ENCODE measurements at regions of chr10 and their contacts with region 1.

Region 1: DNA sequence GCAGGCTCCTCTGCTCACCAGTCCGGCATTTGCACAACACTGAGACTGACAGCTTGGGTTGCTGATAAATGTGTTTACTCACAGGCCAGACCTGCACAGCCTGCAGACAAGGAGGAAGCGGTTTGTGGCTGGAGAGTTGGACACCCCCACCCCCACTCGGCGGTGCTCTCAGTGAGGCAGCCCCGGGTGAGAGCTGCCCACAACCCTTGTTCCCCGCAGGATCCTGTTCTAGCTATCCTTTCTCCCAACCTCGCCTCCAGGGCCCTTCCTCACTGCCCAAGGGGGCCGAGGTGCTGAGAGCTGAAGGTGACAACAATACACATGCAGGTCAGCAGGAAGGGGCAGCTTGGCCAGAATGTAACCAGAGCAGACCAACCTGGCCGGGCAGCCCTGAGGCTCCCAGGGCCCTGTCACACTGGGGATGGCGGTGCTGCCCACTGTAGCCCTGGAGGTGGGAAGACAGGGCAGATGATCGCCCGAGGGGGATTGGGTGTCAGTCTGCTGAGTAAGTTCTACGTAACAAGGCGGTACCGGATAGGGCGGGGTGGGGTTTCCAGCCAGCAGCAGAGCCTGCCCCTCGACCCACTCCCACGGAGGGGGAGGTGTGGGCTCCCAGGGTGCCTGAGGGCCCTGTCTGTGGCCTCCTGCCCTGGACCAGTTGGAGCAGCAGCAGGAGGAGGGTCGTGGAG is 2.1 kb upstream of the ADAM8 start:
- DNase-seq: peak; percentile 44
- ATAC-seq: peak; percentile 10
- H3K4me3 Mint-ChIP-seq: peak overlapping the region; percentile 76
- H3K27ac Mint-ChIP-seq: peak overlapping the region; percentile 80
- H3K4me1 Mint-ChIP-seq: peaks cover 38% of the 10 kb centered on the region
- H3K27me3 Mint-ChIP-seq: no peaks in the 10 kb centered on the region
- CTCF ChIP-seq: no peak

Region 2: DNA sequence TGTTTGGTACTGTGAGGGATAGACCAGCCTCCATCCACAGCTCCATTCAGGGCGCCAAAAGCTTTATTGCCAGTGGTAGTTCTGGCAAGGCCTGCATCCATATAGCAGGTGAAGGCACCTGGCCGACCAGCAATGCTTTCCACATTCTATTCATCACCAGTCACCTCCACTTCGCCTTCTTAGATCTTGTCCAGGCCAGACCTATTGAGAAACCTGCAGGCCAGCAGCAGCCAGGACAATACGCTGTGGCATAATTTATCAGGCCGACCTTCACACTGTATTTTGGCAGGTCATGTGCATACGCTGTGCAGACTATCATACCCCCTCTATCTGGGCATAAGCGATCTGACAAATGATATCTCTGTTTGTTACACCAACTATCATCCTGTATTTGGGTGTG is 133.9 kb before region 1 on chr10:
- CTCF ChIA-PET with region 1: interaction called, 4 read pairs
- POLR2A ChIA-PET with region 1: interaction called, 5 read pairs
- intact Hi-C with region 1: loop called (anchors 1 kb)
- DNase-seq: no peak
- ATAC-seq: no peak
- H3K4me3 Mint-ChIP-seq: no peak overlapping the region
- H3K27ac Mint-ChIP-seq: no peak overlapping the region
- H3K4me1 Mint-ChIP-seq: peaks cover 7% of the 10 kb centered on the region
- H3K27me3 Mint-ChIP-seq: peaks cover 49% of the 10 kb centered on the region
- CTCF ChIP-seq: no peak

Region 3: DNA sequence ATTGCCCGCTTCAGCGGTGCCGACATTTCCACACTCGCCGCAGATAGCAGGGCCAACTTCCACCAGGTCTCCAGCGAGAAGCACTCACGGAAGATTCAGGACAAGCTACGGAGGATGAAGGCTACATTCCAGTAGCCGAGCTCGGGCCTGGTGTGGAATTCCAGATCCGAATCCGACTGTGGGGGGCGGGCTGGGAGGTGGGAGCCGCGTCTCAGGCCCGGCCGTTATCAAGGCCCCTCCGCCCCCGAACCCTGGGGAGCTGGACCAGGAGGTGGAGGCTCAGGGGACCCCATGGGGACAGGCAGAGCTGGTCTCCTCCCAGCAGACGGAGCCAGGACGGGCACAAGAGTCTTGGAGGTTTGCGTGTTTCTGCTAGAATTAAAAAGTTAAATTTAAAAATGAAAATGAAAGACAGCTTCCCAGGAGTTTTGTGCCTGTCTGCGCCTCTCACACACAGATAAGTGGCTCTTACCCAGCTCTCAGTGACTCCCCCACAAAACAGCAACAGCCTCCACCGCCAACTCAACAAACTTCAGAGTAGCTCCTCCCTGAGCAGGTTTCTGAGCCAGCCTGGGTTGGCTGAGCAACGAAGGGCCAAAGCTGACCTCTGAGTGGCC is 53.9 kb before region 1 on chr10:
- CTCF ChIA-PET with region 1: no interaction called
- POLR2A ChIA-PET with region 1: no interaction called
- intact Hi-C with region 1: no loop called
- DNase-seq: no peak
- ATAC-seq: no peak
- H3K4me3 Mint-ChIP-seq: no peak overlapping the region
- H3K27ac Mint-ChIP-seq: no peak overlapping the region
- H3K4me1 Mint-ChIP-seq: peaks cover 19% of the 10 kb centered on the region
- H3K27me3 Mint-ChIP-seq: peaks cover 43% of the 10 kb centered on the region
- CTCF ChIP-seq: no peak

Region 4: GRCh38 chr10:133235932-133236331 is 42.8 kb before region 1 on chr10:
- CTCF ChIA-PET with region 1: no interaction called
- POLR2A ChIA-PET with region 1: interaction called, 12 read pairs
- intact Hi-C with region 1: loop called (anchors 2 kb)
- DNase-seq: no peak
- ATAC-seq: peak; percentile 40
- H3K4me3 Mint-ChIP-seq: peak overlapping the region; percentile 66
- H3K27ac Mint-ChIP-seq: no peak overlapping the region
- H3K4me1 Mint-ChIP-seq: peaks cover 31% of the 10 kb centered on the region
- H3K27me3 Mint-ChIP-seq: peaks cover 18% of the 10 kb centered on the region
- CTCF ChIP-seq: no peak

Region 5: DNA sequence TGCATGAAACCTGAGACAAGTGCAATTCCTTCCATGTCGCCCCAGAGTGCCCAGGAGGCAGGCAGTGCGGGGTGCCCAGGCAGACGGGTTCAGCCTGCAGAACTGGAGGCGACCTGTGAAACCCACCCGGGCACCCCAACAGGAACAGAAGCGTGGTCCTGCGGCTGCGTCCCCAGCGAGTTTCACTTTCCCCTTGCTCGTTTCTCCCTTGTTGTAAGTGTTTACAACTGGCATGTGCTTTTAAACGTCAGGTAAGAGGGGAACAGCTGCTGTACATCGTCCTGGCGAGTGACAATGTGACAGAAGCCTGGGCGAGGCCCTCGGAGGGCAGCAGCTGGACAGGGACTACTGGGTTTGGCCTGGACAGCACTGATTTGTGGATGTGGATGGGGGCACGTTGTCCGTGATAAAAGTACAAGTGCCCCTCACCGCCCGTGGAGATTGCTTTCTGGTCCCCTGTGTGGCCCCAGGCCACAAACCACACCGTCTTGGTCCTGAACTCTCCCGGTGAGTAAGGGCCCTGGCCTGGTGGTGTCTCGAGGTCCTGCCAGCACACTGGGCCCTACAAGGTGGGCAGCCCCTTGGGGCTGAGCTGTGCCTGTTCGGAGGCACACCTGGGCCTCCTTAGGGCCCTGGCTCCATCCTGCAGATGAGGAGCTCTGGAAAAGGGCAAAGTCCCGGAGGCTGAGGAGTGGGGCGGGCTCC is 37.1 kb before region 1 on chr10:
- CTCF ChIA-PET with region 1: no interaction called
- POLR2A ChIA-PET with region 1: interaction called, 12 read pairs
- intact Hi-C with region 1: loop called (anchors 2 kb)
- DNase-seq: no peak
- ATAC-seq: peak; percentile 45
- H3K4me3 Mint-ChIP-seq: peak overlapping the region; percentile 81
- H3K27ac Mint-ChIP-seq: peak overlapping the region; percentile 12
- H3K4me1 Mint-ChIP-seq: peaks cover 37% of the 10 kb centered on the region
- H3K27me3 Mint-ChIP-seq: peaks cover 14% of the 10 kb centered on the region
- CTCF ChIP-seq: no peak